Gastrocnemius medialis (tissue), 4 donors: ENCODE measurements at regions of chr9 and their contacts with region 1.

Region 1: GRCh38 chr9:2241836-2242741 is 226.9 kb downstream of the SMARCA2 start:
- DNase-seq: peak; percentile 47 to 62
- ATAC-seq: peak; percentile 79 to 92
- H3K4me3 ChIP-seq: peak overlapping the region; percentile 53 to 66 (median 62)
- H3K27ac ChIP-seq: peak overlapping the region; percentile 52 to 72 (median 60)
- H3K4me1 ChIP-seq: peaks cover 5 to 16% of the 10 kb centered on the region in 2 donors
- H3K27me3 ChIP-seq: no peaks in the 10 kb centered on the region
- CTCF ChIP-seq: peak in 1 of 5 experiments; percentile 28
- POLR2A ChIP-seq: no peak

Region 2: GRCh38 chr9:2181792-2182191 is 60.3 kb before region 1 on chr9:
- in situ Hi-C with region 1: no loop called
- intact Hi-C with region 1: no loop called
- DNase-seq: peak in 1 of 2 donors; percentile 26
- ATAC-seq: peak in 1 of 2 donors; percentile 49
- H3K4me3 ChIP-seq: no peak overlapping the region
- H3K27ac ChIP-seq: no peak overlapping the region
- H3K4me1 ChIP-seq: peaks cover 9 to 13% of the 10 kb centered on the region in 2 donors
- H3K27me3 ChIP-seq: no peaks in the 10 kb centered on the region
- CTCF ChIP-seq: peak in 4 of 5 experiments; percentile 33 to 59 (median 48)
- POLR2A ChIP-seq: no peak

Region 3: DNA sequence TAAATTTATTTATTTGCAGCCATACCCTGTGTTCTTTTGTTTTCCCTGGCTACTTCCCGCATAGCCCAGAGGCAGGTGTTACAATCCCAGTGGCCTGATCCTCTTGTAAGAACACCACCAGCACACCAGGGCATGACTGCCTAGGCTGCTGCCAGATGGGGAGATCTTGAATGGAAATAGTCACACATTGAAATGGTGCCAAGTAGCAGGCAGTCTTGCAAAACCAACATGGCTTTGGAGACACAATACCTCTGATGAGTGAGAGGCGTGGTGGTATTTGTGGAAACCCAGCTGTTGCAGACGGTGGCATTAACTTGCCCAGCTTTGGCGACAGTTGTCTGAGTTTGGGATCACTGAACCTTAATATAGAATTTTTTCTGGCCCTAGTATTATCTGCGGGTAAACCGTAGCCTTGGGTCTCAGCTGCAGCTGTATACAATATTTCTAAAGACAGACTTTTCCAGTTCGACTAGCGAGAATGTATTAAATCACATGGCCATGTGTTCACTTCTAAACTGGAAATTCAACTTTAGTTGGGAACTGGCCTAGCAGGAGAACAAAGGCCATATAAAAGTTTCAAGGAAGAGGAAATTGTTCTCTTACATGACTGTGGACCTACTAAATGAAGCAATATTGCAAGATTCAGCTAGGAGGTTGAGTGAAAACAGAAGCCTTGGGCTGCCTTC is 50.0 kb after region 1 on chr9:
- in situ Hi-C with region 1: no loop called
- intact Hi-C with region 1: loop called (anchors 5 kb)
- DNase-seq: peak; percentile 81 to 91
- ATAC-seq: peak; percentile 92 to 96
- H3K4me3 ChIP-seq: no peak overlapping the region
- H3K27ac ChIP-seq: peak overlapping the region; percentile 62 to 83 (median 76)
- H3K4me1 ChIP-seq: peaks cover 12 to 20% of the 10 kb centered on the region in 2 donors
- H3K27me3 ChIP-seq: no peaks in the 10 kb centered on the region
- CTCF ChIP-seq: no peak
- POLR2A ChIP-seq: no peak

Region 4: DNA sequence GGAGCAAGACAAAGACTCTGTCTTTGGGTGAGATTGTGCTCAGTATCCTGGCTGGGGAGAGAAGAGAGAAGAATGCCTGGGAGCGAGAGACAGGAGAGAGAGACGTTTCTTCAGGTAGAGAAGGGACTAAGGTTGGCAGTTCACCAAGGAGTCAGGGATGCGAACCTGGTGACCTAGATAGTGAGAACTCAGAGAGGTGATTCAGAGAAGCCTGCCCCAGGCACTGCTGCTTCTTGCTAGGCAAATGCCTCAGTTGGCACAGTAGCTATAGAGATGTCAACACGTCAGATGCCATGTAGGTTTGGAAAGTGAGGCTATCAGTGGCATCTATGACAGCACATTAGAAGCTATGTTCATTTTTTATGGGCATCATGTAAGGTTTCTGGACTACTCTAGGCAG is 147.9 kb after region 1 on chr9:
- in situ Hi-C with region 1: no loop called
- intact Hi-C with region 1: no loop called
- DNase-seq: no peak
- ATAC-seq: no peak
- H3K4me3 ChIP-seq: no peak overlapping the region
- H3K27ac ChIP-seq: no peak overlapping the region
- H3K4me1 ChIP-seq: no peaks in the 10 kb centered on the region
- H3K27me3 ChIP-seq: no peaks in the 10 kb centered on the region
- CTCF ChIP-seq: no peak
- POLR2A ChIP-seq: no peak

Region 5: GRCh38 chr9:2453703-2454102 is 211.6 kb after region 1 on chr9:
- in situ Hi-C with region 1: no loop called
- intact Hi-C with region 1: no loop called
- DNase-seq: no peak
- ATAC-seq: no peak
- H3K4me3 ChIP-seq: no peak overlapping the region
- H3K27ac ChIP-seq: no peak overlapping the region
- H3K4me1 ChIP-seq: no peaks in the 10 kb centered on the region
- H3K27me3 ChIP-seq: no peaks in the 10 kb centered on the region
- CTCF ChIP-seq: no peak
- POLR2A ChIP-seq: no peak

Region 6: DNA sequence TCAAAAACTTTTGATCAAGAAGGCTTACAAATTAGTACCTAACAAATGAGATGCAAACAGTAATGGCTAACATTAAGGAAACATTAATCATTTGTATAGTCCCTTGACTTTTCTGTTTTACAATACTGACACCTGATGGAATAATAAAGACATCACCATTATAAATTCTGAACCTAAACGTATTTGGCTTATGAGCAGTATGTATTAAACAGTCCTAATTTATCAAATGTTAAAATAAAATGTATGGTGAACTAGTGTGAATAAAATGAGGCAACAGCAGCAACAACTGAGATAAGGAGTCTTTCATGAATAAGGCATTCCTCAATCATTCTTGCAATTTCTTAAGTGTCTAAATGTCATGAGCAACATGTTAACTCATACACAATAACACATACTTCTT is 595.8 kb after region 1 on chr9:
- in situ Hi-C with region 1: no loop called
- intact Hi-C with region 1: loop called (anchors 5 kb)
- DNase-seq: no peak
- ATAC-seq: no peak
- H3K4me3 ChIP-seq: peak overlapping the region in 1 of 4 donors; percentile 25
- H3K27ac ChIP-seq: peak overlapping the region in 3 of 4 donors; percentile 2 to 50 (median 21)
- H3K4me1 ChIP-seq: peaks cover 43 to 45% of the 10 kb centered on the region in 2 donors
- H3K27me3 ChIP-seq: no peaks in the 10 kb centered on the region
- CTCF ChIP-seq: no peak
- POLR2A ChIP-seq: no peak